ENCODE measurements at regions of chr4 and their contacts with region 1.

Region 1: GRCh38 chr4:36325499-36325898 is 44.1 kb downstream of the DTHD1 start:
- DNase-seq: no peak
- ATAC-seq: peak; percentile 43
- H3K4me3 Mint-ChIP-seq: no peak overlapping the region
- H3K27ac Mint-ChIP-seq: peak overlapping the region; percentile 86
- H3K4me1 Mint-ChIP-seq: peaks cover 66% of the 10 kb centered on the region
- H3K27me3 Mint-ChIP-seq: no peaks in the 10 kb centered on the region

Region 2: DNA sequence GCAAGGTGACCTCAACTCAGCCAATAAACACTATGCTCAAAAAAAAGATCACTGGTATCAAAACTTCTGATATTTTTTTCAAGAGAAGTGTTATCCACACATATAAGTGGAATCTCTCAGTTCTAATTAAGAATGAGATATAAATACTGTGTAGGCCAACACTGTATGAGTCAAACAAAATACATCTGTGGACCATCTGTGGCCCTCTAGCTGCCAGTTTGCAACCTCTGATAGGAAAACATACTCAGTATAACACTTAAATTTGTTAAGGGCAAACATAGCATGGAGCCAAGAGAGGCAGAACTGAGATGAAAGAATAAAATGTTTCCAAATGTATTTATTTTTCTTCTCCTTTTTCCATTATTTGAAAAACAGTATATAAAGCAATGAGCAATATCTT is 458.4 kb before region 1 on chr4:
- CTCF ChIA-PET with region 1: no interaction called
- POLR2A ChIA-PET with region 1: no interaction called
- intact Hi-C with region 1: no loop called
- DNase-seq: no peak
- ATAC-seq: no peak
- H3K4me3 Mint-ChIP-seq: no peak overlapping the region
- H3K27ac Mint-ChIP-seq: no peak overlapping the region
- H3K4me1 Mint-ChIP-seq: no peaks in the 10 kb centered on the region
- H3K27me3 Mint-ChIP-seq: no peaks in the 10 kb centered on the region

Region 3: GRCh38 chr4:35970366-35970960 is 355.0 kb before region 1 on chr4:
- CTCF ChIA-PET with region 1: no interaction called
- POLR2A ChIA-PET with region 1: no interaction called
- intact Hi-C with region 1: loop called in 1 of 2 experiments (anchors 10 kb)
- DNase-seq: peak; percentile 42
- ATAC-seq: peak; percentile 81
- H3K4me3 Mint-ChIP-seq: no peak overlapping the region
- H3K27ac Mint-ChIP-seq: no peak overlapping the region
- H3K4me1 Mint-ChIP-seq: peaks cover 10% of the 10 kb centered on the region
- H3K27me3 Mint-ChIP-seq: peaks cover 6% of the 10 kb centered on the region

Region 4: DNA sequence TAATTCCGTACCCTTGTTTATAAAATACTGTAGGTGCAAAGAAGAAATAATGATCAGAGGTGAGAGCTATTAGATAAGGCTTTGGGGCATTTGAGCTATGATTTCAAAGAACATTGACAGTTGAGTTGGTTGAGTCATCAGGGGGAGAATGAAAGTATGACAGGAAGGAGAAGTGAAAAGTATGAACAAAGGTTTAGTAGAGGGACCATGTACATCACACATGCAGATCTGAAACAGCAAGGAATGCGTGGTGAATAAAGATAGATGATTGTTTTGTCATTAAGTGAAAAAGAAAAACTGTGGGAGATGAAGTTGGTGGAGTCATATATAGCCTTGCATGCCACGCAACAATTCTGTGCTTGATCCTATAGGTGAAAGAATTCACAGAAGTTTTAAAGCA is 244.3 kb before region 1 on chr4:
- CTCF ChIA-PET with region 1: no interaction called
- POLR2A ChIA-PET with region 1: no interaction called
- intact Hi-C with region 1: loop called (anchors 2 to 10 kb)
- DNase-seq: peak; percentile 29
- ATAC-seq: peak; percentile 97
- H3K4me3 Mint-ChIP-seq: no peak overlapping the region
- H3K27ac Mint-ChIP-seq: no peak overlapping the region
- H3K4me1 Mint-ChIP-seq: peaks cover 5% of the 10 kb centered on the region
- H3K27me3 Mint-ChIP-seq: no peaks in the 10 kb centered on the region

Region 5: DNA sequence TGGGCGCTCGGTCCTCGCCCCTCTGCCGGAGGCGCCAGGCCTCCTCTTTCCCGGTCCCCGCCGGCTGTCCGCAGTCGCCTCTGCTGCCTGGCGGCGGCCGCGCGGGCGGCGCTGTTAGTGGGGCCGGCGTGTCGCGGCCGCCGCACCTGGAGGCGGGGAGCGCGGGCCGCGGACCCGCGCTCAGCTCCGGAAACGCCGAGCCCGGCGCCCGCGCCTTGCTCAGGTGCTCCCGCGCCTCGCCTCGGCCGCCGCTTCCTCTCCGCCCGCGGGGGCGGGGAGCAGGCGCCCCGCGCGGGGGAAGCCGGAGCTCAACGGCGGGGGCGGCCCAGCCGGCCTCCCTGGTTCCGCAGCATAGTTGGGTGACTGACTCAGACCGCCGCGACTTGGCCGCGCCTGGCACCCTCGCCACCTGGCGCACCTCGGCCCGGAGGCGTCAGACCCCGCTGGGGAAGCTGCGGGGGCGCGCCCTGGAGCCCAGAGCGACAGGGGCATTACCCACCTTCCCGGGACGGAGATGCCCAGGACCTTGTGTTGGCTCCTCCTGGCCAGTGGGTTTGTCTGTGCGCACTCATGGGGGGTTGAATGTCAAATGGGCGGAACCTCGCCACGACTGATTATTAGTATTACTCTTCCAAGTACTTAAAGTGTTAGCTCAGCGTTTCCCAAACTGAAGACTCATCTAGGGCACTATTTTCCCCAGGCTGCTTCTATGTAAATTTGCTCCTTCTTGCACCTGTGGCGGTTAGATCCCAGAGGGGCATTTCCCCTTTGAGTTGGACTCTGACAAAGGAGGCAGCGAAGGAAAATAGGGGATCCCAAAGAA is 81.0 kb before region 1 on chr4 and contains the start of gene ARAP2:
- CTCF ChIA-PET with region 1: interaction called, 8 read pairs
- POLR2A ChIA-PET with region 1: interaction called, 8 read pairs
- intact Hi-C with region 1: loop called (anchors 1 kb)
- DNase-seq: peak; percentile 84
- ATAC-seq: peak; percentile 72
- H3K4me3 Mint-ChIP-seq: peak within 1 kb of the TSS; percentile 87
- H3K27ac Mint-ChIP-seq: peak within 1 kb of the TSS; percentile 93
- H3K4me1 Mint-ChIP-seq: peaks cover 36% of the 10 kb centered on the region
- H3K27me3 Mint-ChIP-seq: no peaks in the 10 kb centered on the region
- total RNA-seq, gene ARAP2: 40.0 to 42.5 TPM

Region 6: DNA sequence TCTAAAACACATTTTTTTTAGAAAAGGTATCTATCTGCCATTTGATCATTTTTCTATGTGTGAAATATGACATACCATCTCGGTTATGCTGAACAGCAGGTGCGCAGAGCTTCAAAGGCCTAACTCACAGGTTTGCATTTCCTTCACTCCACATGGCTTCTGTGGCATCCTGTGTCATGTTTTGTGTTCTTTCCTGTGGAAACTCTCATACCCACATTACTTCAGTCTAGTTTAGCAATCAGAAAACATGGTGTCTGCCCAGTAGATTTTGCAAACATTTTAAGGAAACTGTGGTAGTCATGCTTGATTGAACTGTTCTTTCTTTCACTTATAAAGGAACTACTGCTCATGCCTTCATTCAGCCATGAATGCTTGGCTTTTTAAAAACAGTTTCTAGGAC is 69.9 kb before region 1 on chr4:
- CTCF ChIA-PET with region 1: no interaction called
- POLR2A ChIA-PET with region 1: no interaction called
- intact Hi-C with region 1: loop called (anchors 1 to 2 kb)
- DNase-seq: peak; percentile 73
- ATAC-seq: peak; percentile 87
- H3K4me3 Mint-ChIP-seq: peak overlapping the region; percentile 50
- H3K27ac Mint-ChIP-seq: peak overlapping the region; percentile 93
- H3K4me1 Mint-ChIP-seq: peaks cover 39% of the 10 kb centered on the region
- H3K27me3 Mint-ChIP-seq: no peaks in the 10 kb centered on the region

Region 7: GRCh38 chr4:36351082-36351666 is 25.7 kb after region 1 on chr4:
- CTCF ChIA-PET with region 1: interaction called, 5 read pairs
- POLR2A ChIA-PET with region 1: interaction called, 6 read pairs
- intact Hi-C with region 1: loop called (anchors 1 to 2 kb)
- DNase-seq: peak; percentile 87
- ATAC-seq: peak; percentile 58
- H3K4me3 Mint-ChIP-seq: no peak overlapping the region
- H3K27ac Mint-ChIP-seq: no peak overlapping the region
- H3K4me1 Mint-ChIP-seq: peaks cover 23% of the 10 kb centered on the region
- H3K27me3 Mint-ChIP-seq: peaks cover 3% of the 10 kb centered on the region

Measured in activated CD4-positive, alpha-beta T cell treated with anti-CD3 and anti-CD28 coated beads for 36 hours (primary cell).